Activated B cell treated with CpG ODN at 0.5 μM for 24 hours (primary cell): ENCODE measurements at regions of chr6 and their contacts with region 1.

Region 1: DNA sequence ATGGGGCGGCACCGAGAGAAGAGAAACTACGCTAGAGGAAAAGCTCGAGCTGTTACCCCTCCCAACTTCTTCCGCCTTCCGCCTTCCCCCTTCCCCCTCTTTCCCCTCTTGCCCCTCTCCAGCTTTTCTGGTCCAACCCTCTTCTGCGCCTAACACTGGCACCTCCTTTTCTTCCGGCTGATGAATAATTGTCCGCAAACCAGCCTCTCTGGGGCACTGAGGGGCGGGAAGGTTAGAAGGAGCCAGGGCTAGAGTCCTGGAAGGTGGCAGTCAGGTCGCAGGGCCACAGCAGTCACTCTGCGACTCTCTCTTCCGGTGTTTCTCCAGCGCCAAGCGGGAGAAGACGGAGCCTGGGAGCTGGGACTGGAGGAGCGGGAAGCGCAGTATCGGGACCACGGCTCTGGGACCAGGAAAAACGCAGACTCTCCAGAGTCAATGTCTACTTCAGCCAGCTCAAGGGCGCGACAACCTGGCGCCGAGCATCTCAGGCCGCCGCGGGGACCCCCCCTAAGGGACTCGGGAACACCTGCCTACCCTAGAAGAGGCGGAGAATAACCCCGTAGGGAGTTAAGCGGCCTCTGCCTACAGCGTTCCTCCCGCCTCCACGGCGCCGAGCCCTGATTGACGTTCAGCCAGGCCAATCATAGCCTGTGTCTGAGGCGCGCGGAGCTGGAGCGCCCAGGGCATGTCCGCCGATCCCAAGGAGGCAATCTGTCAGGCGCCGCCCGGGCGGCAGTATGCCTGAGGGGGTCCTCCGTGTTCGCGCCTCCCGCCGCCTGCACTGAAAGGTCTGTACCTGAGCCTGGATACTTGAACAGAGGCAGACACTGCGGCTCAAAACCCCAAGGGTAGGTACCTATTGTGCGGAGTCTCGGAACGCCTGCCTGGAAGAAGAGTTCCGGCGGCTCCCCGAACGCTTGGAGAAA is 40.4 kb downstream of the PSMB9 start:
- DNase-seq: peak; percentile 96
- ATAC-seq: peak; percentile 97
- H3K4me3 Mint-ChIP-seq: peak overlapping the region; percentile 99
- H3K27ac Mint-ChIP-seq: peak overlapping the region; percentile 97
- H3K4me1 Mint-ChIP-seq: peaks cover 70% of the 10 kb centered on the region
- H3K27me3 Mint-ChIP-seq: no peaks in the 10 kb centered on the region
- CTCF ChIP-seq: no peak

Region 2: GRCh38 chr6:32642720-32643106 is 251.6 kb before region 1 on chr6:
- CTCF ChIA-PET with region 1: no interaction called
- POLR2A ChIA-PET with region 1: no interaction called
- intact Hi-C with region 1: no loop called
- DNase-seq: no peak
- ATAC-seq: no peak
- H3K4me3 Mint-ChIP-seq: peak overlapping the region; percentile 100
- H3K27ac Mint-ChIP-seq: peak overlapping the region; percentile 77
- H3K4me1 Mint-ChIP-seq: peaks cover 61% of the 10 kb centered on the region
- H3K27me3 Mint-ChIP-seq: no peaks in the 10 kb centered on the region
- CTCF ChIP-seq: no peak

Region 3: GRCh38 chr6:32752580-32752979 is 141.8 kb before region 1 on chr6:
- CTCF ChIA-PET with region 1: no interaction called
- POLR2A ChIA-PET with region 1: no interaction called
- intact Hi-C with region 1: no loop called
- DNase-seq: no peak
- ATAC-seq: no peak
- H3K4me3 Mint-ChIP-seq: no peak overlapping the region
- H3K27ac Mint-ChIP-seq: no peak overlapping the region
- H3K4me1 Mint-ChIP-seq: peaks cover 1% of the 10 kb centered on the region
- H3K27me3 Mint-ChIP-seq: peaks cover 7% of the 10 kb centered on the region
- CTCF ChIP-seq: no peak

Region 4: GRCh38 chr6:32843979-32844838 is 50.1 kb before region 1 on chr6 and contains the start of gene PSMB8:
- CTCF ChIA-PET with region 1: no interaction called
- POLR2A ChIA-PET with region 1: interaction called, 18 read pairs
- intact Hi-C with region 1: no loop called
- DNase-seq: peak; percentile 96
- ATAC-seq: peak; percentile 78
- H3K4me3 Mint-ChIP-seq: peak within 1 kb of the TSS; percentile 99
- H3K27ac Mint-ChIP-seq: peak within 1 kb of the TSS; percentile 100
- H3K4me1 Mint-ChIP-seq: peaks cover 92% of the 10 kb centered on the region
- H3K27me3 Mint-ChIP-seq: no peaks in the 10 kb centered on the region
- CTCF ChIP-seq: no peak
- total RNA-seq, gene PSMB8: 182 and 194 TPM in 2 replicates

Region 5: GRCh38 chr6:32920715-32921114 is 26.4 kb after region 1 on chr6:
- CTCF ChIA-PET with region 1: interaction called, 3 read pairs
- POLR2A ChIA-PET with region 1: interaction called, 23 read pairs
- intact Hi-C with region 1: no loop called
- DNase-seq: no peak
- ATAC-seq: peak; percentile 40
- H3K4me3 Mint-ChIP-seq: peak overlapping the region; percentile 67
- H3K27ac Mint-ChIP-seq: peak overlapping the region; percentile 81
- H3K4me1 Mint-ChIP-seq: peaks cover 73% of the 10 kb centered on the region
- H3K27me3 Mint-ChIP-seq: no peaks in the 10 kb centered on the region
- CTCF ChIP-seq: no peak

Region 6: DNA sequence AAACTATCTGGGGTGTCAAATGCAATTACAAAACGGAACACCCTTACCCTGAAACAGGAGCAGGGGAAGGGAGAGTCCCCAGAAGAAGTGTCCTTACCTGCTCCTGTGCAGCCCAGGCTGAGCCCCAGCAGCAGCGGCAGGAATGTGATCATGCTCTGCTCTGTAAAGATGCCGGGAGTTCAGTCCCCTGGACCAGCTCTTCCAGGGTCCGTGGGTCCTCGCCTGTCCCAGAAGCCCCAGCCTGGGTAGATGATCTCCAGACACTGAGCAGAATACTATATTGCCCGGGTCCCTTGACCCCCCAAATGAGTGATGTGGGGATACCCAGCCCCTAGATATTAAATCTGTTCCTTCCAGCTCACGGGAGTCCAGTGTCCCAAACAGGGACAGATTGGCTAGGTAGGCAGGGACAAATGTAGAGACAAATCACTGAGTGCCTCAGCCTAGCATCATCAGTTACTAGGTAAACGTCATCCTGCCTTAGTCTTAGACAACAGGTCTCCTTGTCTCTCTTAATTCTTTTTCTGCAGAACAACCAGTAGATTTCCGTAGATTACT is 46.4 kb after region 1 on chr6 and contains the start of gene HLA-DMB:
- CTCF ChIA-PET with region 1: interaction called, 5 read pairs
- POLR2A ChIA-PET with region 1: interaction called, 187 read pairs
- intact Hi-C with region 1: loop called (anchors 1 kb)
- DNase-seq: peak; percentile 53
- ATAC-seq: peak; percentile 60
- H3K4me3 Mint-ChIP-seq: peak within 1 kb of the TSS; percentile 98
- H3K27ac Mint-ChIP-seq: peak within 1 kb of the TSS; percentile 99
- H3K4me1 Mint-ChIP-seq: peaks cover 85% of the 10 kb centered on the region
- H3K27me3 Mint-ChIP-seq: no peaks in the 10 kb centered on the region
- CTCF ChIP-seq: no peak
- total RNA-seq, gene HLA-DMB: 341 and 365 TPM in 2 replicates

Region 7: DNA sequence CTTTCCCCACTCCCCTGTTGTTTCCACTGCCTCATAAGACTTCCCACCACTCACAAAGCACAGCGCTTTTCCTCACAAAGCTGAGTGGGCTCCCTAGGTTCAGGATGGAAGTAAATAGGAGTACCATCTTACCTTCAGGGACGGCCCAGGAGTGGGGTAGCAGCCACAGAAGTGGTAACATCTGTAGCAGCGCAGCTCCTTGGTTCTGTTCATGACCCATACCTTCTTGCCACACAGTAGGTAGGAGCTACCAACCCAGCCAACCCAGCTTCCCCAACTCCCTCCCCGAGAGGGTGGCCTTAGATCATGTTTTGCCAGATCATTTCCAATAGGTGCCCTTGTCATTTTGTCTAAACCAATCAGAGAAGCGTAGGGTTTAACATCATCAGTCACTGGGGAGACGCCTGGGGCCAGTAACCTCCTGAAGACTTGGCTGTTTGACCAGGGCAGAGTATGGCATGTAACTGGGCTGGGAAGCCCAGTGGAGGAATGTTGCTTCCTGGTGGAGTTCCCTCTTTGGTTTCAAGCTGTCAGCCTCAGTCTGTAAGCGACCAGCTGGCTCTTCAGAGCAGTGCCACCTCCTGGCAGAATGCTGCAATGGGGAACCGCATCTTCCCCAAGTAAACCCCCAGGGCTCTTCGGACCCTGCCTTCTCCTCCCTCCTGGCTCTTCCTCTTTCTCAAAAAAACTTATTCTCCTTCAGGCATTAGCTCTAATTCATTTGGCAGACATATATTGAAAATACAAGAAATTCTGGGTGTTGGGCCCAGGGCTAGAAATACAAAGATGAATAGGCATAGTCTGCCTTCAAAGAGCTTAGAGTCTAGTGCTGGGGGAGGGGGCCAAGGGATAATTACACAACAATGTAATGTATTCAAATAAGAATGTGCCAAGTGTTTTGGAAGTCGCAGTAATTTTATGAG is 58.7 kb after region 1 on chr6 and contains the start of gene HLA-DMA:
- CTCF ChIA-PET with region 1: interaction called, 14 read pairs
- POLR2A ChIA-PET with region 1: interaction called, 77 read pairs
- intact Hi-C with region 1: loop called (anchors 2 kb)
- DNase-seq: peak; percentile 65
- ATAC-seq: peak; percentile 91
- H3K4me3 Mint-ChIP-seq: peak within 1 kb of the TSS; percentile 98
- H3K27ac Mint-ChIP-seq: peak within 1 kb of the TSS; percentile 97
- H3K4me1 Mint-ChIP-seq: peaks cover 85% of the 10 kb centered on the region
- H3K27me3 Mint-ChIP-seq: no peaks in the 10 kb centered on the region
- CTCF ChIP-seq: no peak
- total RNA-seq, gene HLA-DMA: 371 and 387 TPM in 2 replicates

Region 8: DNA sequence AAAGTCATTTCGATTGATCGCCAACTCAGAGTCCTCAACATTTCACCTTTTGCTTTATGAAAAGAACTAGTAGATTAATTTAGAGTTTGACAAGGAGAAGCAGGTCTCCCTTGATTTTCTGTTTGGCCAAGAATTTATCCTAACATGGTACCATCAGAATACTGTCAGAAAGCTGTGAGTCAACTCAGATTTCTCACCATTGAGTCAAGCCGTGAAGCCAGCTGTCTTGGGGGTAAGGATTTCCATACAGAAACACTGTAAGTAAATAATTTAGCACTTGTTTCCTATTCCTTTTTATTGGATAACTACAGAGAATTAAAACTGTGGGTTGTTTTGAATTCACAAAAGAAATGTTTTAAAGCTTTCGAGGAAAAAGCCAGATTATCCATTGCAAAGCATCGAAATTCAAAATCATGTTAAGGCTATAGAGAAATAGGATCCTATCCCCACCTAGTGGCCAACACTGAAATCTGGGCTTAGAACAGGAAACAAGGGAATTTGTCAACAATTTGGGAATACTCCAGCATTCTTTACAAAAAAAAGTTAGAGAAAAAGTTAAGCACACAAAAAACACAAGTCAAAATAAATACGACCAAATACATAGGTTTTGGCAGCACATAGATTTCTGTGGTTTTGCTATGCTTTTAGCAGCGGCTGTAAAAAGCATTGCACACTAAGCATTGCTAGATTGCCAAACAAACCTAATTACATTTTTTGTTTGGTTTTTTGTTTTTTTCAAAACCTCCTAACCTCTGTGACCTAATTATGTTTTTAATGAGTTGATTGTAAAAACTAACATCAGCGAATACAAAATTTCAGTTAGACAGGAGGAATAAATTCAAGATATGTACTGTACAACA is 253.7 kb after region 1 on chr6:
- CTCF ChIA-PET with region 1: no interaction called
- POLR2A ChIA-PET with region 1: no interaction called
- intact Hi-C with region 1: loop called (anchors 10 kb)
- DNase-seq: no peak
- ATAC-seq: no peak
- H3K4me3 Mint-ChIP-seq: no peak overlapping the region
- H3K27ac Mint-ChIP-seq: no peak overlapping the region
- H3K4me1 Mint-ChIP-seq: peaks cover 14% of the 10 kb centered on the region
- H3K27me3 Mint-ChIP-seq: peaks cover 6% of the 10 kb centered on the region
- CTCF ChIP-seq: peak; percentile 29